Activated CD8-positive, alpha-beta memory T cell treated with anti-CD3 and anti-CD28 coated beads, Interleukin-2, amount 10 ng/mL, durations not matched to agents 7 days and 5 days (primary cell): ENCODE measurements at regions of chr11 and their contacts with region 1.

Region 1: DNA sequence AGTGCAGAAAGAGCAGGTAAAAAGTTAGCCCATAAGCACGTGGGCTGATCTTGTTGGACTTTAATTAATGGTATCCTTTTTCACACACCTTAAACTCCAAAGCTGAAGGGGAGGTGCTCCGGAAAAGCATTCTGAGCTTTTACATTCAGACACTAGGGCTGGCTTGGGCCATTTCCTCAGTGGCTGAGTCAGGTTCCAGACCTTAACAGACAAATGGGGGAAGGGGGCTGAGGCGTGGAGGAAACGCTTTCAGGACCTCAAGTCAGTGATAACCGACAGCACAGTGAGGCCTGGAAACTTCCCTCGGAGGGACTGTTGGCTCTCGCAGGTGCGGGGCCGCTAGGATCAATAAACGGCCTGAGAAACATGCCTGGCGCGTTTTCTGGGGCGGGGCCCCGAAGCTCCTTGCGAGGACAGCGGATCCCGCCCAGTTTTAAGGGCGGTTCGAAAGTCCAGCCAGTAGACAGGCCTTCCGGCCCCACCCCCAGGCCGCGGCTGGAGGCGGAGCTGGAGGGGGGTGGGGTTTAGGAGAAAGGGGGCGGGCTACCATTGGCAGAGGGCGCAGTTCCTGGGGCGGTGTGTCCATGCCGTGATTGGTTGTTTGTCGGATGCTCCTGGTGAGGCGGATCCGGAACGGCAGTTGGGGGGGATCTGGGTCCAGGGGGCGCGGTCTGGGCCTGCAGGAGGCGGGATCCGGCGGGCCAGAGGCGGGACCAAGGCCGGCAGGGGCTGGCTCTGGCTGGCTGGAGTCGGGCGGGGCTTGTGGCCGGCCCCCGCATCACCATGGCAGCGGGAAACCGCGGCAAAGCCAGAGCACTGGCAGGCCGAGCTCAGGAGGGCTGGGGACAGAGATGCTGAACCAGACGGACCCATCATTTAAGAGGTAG is 8.0 kb downstream of the C11orf52 start:
- DNase-seq: peak; percentile 97
- ATAC-seq: peak; percentile 94
- H3K4me3 Mint-ChIP-seq: peak overlapping the region; percentile 81
- H3K27ac Mint-ChIP-seq: peak overlapping the region; percentile 89
- H3K4me1 Mint-ChIP-seq: peaks cover 23% of the 10 kb centered on the region
- H3K27me3 Mint-ChIP-seq: peaks cover 4% of the 10 kb centered on the region

Region 2: DNA sequence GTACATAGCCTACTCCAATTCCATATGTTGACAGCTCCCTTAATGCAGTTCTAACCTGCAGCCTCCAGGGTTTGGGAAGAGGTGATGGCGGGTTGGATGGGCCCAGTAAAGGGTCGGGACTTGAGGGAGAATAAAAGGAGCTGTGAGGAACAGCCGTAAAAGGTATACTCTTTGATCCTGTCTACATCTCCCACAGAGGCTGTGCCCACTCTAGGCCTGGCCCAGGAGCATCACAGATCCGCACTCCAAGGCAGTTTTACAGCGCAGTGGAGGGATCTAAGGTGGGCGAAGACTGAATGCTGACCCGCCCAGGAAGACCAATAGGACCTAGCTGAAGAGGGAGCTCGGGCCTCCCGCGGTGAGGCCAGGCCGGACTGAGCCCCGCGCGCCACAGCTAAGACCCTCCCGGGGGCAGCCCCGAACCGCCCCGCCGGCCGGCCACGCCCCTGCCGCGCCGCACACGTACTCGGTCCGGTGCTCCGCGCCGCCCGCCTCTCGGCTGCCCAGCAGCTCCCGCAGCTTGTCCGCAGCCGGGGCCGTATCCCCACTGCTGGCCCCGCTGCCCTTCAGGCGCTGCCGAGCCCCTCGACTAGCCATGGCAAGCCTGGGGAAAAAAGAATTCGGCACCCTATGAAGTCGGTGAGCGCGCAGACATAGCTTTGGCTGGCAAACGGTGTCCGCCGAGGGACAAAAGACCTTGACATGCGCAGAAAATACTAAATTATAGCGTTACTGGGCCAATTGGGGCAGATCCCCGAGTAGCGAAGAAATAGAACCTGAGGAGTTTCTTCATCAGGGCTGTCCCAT is 55.7 kb before region 1 on chr11 and contains the start of gene ALG9:
- CTCF ChIA-PET with region 1: interaction called, 10 read pairs
- DNase-seq: peak; percentile 91
- ATAC-seq: peak; percentile 95
- H3K4me3 Mint-ChIP-seq: peak within 1 kb of the TSS; percentile 89
- H3K27ac Mint-ChIP-seq: peak within 1 kb of the TSS; percentile 88
- H3K4me1 Mint-ChIP-seq: peaks cover 30% of the 10 kb centered on the region
- H3K27me3 Mint-ChIP-seq: no peaks in the 10 kb centered on the region
- total RNA-seq, gene ALG9: 23.2 to 27.3 TPM

Region 3: GRCh38 chr11:111879637-111879960 is 47.1 kb before region 1 on chr11:
- CTCF ChIA-PET with region 1: interaction called, 10 read pairs
- DNase-seq: no peak
- ATAC-seq: peak; percentile 8
- H3K4me3 Mint-ChIP-seq: peak overlapping the region; percentile 85
- H3K27ac Mint-ChIP-seq: peak overlapping the region; percentile 97
- H3K4me1 Mint-ChIP-seq: peaks cover 20% of the 10 kb centered on the region
- H3K27me3 Mint-ChIP-seq: no peaks in the 10 kb centered on the region

Region 4: GRCh38 chr11:111910676-111911562 is 15.8 kb before region 1 on chr11:
- CTCF ChIA-PET with region 1: no interaction called
- DNase-seq: no peak
- ATAC-seq: no peak
- H3K4me3 Mint-ChIP-seq: no peak overlapping the region
- H3K27ac Mint-ChIP-seq: no peak overlapping the region
- H3K4me1 Mint-ChIP-seq: no peaks in the 10 kb centered on the region
- H3K27me3 Mint-ChIP-seq: peaks cover 63% of the 10 kb centered on the region

Region 5: DNA sequence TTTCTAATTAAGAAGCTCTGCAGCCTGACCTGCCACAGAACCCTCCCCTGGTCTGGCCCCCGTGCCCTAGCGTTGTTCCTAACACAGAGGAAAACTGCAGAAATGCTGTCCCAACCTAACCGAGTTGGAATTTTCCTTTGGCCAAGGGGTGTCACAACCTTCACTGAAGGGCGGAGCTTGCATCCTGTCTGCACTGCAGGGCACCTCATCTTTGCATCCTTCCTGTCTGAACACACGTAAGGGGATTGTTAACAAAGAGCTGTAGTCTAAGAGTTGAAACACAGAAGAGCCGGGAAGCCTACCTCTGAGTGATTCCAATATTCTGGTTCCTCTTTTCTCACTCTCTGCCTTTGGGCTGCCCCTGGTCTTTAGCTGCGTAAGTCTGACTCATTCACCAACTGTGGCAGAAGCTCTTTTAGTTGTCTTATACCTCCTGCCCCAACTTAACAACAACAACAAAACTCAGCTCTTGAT is 12.0 kb after region 1 on chr11:
- CTCF ChIA-PET with region 1: interaction called, 21 read pairs
- DNase-seq: peak; percentile 66
- ATAC-seq: peak; percentile 61
- H3K4me3 Mint-ChIP-seq: peak overlapping the region; percentile 84
- H3K27ac Mint-ChIP-seq: peak overlapping the region; percentile 80
- H3K4me1 Mint-ChIP-seq: peaks cover 38% of the 10 kb centered on the region
- H3K27me3 Mint-ChIP-seq: no peaks in the 10 kb centered on the region

Region 6: DNA sequence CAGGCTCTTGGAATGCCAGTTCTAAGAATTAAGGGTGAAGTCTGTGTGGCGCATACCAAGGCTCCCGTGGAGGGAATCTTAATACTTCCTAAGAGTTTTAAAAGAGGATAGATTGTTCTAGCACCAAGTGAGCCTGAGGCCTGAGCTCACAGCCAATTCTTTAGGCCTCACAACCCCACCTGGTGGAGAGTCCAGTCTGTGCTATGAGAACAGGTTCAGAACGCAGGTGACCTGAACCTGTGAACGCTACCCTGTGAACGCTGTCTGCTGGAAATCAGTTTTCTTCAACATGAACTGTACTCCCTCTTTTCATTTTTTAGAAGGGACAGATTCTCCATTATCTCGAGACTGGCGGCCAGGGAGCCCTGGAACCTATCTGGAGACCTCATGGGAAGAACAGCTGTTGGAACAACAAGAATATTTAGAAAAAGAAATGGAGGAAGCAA is 55.3 kb after region 1 on chr11:
- CTCF ChIA-PET with region 1: interaction called, 66 read pairs
- DNase-seq: peak; percentile 70
- ATAC-seq: peak; percentile 77
- H3K4me3 Mint-ChIP-seq: no peak overlapping the region
- H3K27ac Mint-ChIP-seq: no peak overlapping the region
- H3K4me1 Mint-ChIP-seq: peaks cover 8% of the 10 kb centered on the region
- H3K27me3 Mint-ChIP-seq: peaks cover 7% of the 10 kb centered on the region

Region 7: DNA sequence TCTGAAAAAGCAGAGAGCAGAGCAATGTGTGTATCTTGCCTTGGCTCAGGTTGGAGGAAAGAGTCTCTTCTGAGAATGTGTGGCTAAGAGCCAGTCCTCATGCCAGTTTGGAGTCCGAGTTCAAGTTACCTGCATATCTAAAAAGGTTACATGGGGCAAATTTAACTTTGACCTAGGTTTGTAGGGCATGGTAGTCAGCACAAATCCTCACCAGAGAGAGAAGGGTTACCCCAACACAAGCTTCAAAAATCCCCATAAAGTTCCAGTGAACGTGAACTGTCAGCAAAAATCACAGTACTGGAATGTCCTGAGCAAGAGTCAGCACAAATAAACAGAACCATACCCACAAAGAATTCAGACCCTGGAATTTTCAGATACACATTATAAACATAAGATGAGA is 173.7 kb after region 1 on chr11:
- CTCF ChIA-PET with region 1: no interaction called
- DNase-seq: no peak
- ATAC-seq: no peak
- H3K4me3 Mint-ChIP-seq: no peak overlapping the region
- H3K27ac Mint-ChIP-seq: no peak overlapping the region
- H3K4me1 Mint-ChIP-seq: no peaks in the 10 kb centered on the region
- H3K27me3 Mint-ChIP-seq: no peaks in the 10 kb centered on the region